ENCODE measurements at regions of chr2 and their contacts with region 1.

Region 1: DNA sequence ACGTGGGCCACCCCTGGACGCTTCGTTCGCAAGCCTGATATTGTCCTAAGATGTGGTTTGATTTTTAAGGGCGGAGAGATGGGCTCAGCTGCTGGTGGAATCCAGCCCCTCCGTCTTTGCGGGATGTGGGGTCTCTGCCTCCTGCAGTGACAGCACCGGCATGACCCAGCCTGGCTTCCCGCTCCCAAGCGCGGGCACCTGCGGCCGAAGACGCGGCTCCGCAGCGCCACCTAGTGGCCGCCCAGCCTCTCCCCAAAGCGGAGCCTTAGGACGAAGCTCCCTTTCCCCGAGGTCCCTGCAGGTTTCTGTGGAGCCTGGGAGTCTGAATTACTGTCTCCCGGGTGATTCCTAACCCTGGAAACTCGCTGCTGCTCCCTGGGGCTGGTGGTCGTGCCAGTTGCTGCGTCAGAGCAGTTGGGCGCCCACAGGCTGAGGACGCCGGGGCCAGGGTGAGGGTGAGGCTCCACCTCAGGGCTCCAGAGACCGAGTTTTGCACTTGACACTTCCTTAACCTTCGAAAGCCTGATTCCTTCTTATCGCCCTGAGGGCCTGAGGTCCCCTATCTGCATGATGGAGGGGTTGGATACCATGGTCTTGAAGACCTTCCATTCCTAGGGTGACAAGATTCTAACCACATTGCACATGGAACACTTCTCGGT is 137.5 kb downstream of the TPO start:
- DNase-seq: peak; percentile 57
- ATAC-seq: peak; percentile 40
- H3K4me3 Mint-ChIP-seq: no peak overlapping the region
- H3K27ac Mint-ChIP-seq: no peak overlapping the region
- H3K4me1 Mint-ChIP-seq: peaks cover 4% of the 10 kb centered on the region
- H3K27me3 Mint-ChIP-seq: peaks cover 14% of the 10 kb centered on the region
- CTCF ChIP-seq: peak; percentile 98

Region 2: GRCh38 chr2:529425-529824 is 1021.4 kb before region 1 on chr2:
- CTCF ChIA-PET with region 1: interaction called, 4 read pairs
- POLR2A ChIA-PET with region 1: no interaction called
- intact Hi-C with region 1: loop called (anchors 1 kb)
- DNase-seq: no peak
- ATAC-seq: peak; percentile 56
- H3K4me3 Mint-ChIP-seq: no peak overlapping the region
- H3K27ac Mint-ChIP-seq: no peak overlapping the region
- H3K4me1 Mint-ChIP-seq: peaks cover 2% of the 10 kb centered on the region
- H3K27me3 Mint-ChIP-seq: no peaks in the 10 kb centered on the region
- CTCF ChIP-seq: peak; percentile 56

Region 3: GRCh38 chr2:636641-637405 is 914.0 kb before region 1 on chr2:
- CTCF ChIA-PET with region 1: no interaction called
- POLR2A ChIA-PET with region 1: no interaction called
- intact Hi-C with region 1: loop called (anchors 5 kb)
- DNase-seq: peak; percentile 54
- ATAC-seq: peak; percentile 71
- H3K4me3 Mint-ChIP-seq: peak overlapping the region; percentile 83
- H3K27ac Mint-ChIP-seq: peak overlapping the region; percentile 54
- H3K4me1 Mint-ChIP-seq: peaks cover 4% of the 10 kb centered on the region
- H3K27me3 Mint-ChIP-seq: no peaks in the 10 kb centered on the region
- CTCF ChIP-seq: peak; percentile 77

Region 4: DNA sequence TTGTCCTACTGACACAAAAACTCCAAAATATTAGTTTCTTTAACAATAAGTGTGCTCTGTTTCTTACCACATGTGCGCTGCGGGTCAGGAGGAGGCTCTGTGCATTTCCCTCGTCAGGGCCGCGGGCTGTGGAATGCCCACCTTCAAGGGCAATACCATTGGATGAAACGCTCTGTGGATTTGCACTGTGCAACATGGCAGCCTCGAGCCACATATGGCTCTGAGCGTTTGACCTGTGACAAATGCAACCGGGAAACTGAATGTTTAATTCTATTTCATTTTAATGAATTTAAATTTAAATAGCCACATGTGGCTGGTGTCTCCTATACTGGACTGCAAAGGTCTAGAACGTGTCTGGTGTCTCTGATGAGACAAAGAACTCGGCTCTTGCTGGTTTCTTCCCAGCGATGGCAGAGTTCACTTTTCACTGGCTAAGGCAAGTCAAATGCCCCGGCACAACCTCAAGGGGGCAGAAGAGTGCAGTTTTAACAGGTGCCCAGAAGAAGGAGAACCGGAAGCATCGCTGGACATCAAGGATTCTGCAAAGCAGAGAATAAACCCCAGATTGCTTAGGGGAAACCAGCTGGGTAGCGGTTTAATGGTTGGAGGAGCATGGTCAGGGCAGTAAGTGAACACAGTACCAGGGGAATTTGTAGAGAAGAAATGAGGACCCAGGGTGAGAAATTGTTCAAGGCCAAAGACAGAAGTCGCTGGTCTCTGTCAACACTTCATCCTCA is 836.6 kb before region 1 on chr2:
- CTCF ChIA-PET with region 1: interaction called, 5 read pairs
- POLR2A ChIA-PET with region 1: no interaction called
- intact Hi-C with region 1: loop called (anchors 1 kb)
- DNase-seq: no peak
- ATAC-seq: peak; percentile 82
- H3K4me3 Mint-ChIP-seq: peak overlapping the region; percentile 20
- H3K27ac Mint-ChIP-seq: no peak overlapping the region
- H3K4me1 Mint-ChIP-seq: peaks cover 18% of the 10 kb centered on the region
- H3K27me3 Mint-ChIP-seq: peaks cover 28% of the 10 kb centered on the region
- CTCF ChIP-seq: no peak